CD4-positive, alpha-beta T cell (primary cell): ENCODE measurements at regions of chr5 and their contacts with region 1.

Region 1: GRCh38 chr5:160418561-160419457 is at the start of gene SLU7:
- DNase-seq: peak; percentile 86 to 96 (median 90)
- ATAC-seq: peak; percentile 79
- H3K4me3 ChIP-seq: peak within 1 kb of the TSS; percentile 94
- H3K4me3 Mint-ChIP-seq: peak within 1 kb of the TSS; percentile 98
- H3K27ac ChIP-seq: peak within 1 kb of the TSS; percentile 88 to 91
- H3K27ac Mint-ChIP-seq: peak within 1 kb of the TSS; percentile 92
- H3K4me1 ChIP-seq: peaks cover 33% of the 10 kb centered on the region
- H3K4me1 Mint-ChIP-seq: peaks cover 85% of the 10 kb centered on the region
- H3K27me3 ChIP-seq: no peaks in the 10 kb centered on the region
- H3K27me3 Mint-ChIP-seq: no peaks in the 10 kb centered on the region
- CTCF ChIP-seq: no peak
- total RNA-seq, gene SLU7: 99.9 to 106 TPM

Region 2: DNA sequence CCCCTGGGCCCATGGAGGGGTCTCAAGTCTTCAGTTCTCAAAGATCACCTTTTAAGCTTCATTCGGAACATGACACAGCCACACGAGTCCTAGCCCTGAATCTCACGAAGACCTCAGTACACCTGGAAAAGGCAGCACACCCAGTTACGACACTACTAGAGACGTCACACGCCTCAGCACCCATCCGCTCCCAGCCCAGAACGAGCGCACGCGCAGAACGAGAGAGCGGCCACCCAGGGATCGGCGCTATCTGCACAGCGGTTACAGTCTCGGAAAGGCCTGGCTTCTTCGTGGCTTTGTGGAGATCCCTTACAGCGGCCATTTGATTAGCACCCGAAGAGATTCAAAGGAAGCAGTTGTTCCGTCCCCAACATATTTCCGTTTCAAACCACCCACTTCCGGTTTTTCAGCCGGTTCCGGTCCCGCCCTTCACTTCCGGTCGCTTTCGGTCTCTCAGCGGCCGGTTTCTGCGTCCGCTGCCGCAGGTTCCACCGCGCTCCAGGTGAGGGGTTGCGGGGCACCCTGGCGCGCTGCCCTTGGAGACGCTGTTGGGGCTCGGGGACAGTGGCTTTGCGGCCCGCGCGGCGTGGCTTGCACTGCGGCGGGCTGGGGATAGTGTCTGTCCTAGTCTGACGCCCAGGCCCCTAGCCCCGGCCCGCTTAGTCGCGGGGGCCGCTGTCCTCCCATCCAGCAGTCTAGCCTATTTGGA is 1155.8 kb before region 1 on chr5 and contains the start of gene UBLCP1:
- CTCF ChIA-PET with region 1: no interaction called
- POLR2A ChIA-PET with region 1: no interaction called
- intact Hi-C with region 1: loop called in 1 of 2 experiments (anchors 10 kb)
- DNase-seq: peak; percentile 55 to 94 (median 70)
- ATAC-seq: peak; percentile 90
- H3K4me3 ChIP-seq: peak within 1 kb of the TSS; percentile 74
- H3K4me3 Mint-ChIP-seq: peak within 1 kb of the TSS; percentile 88
- H3K27ac ChIP-seq: peak within 1 kb of the TSS; percentile 90 to 94
- H3K27ac Mint-ChIP-seq: peak within 1 kb of the TSS; percentile 96
- H3K4me1 ChIP-seq: peaks cover 18% of the 10 kb centered on the region
- H3K4me1 Mint-ChIP-seq: peaks cover 53% of the 10 kb centered on the region
- H3K27me3 ChIP-seq: no peaks in the 10 kb centered on the region
- H3K27me3 Mint-ChIP-seq: no peaks in the 10 kb centered on the region
- CTCF ChIP-seq: no peak
- total RNA-seq, gene UBLCP1: 16.5 to 19.0 TPM

Region 3: GRCh38 chr5:160119142-160119904 is 299.5 kb before region 1 on chr5 and contains the start of gene PWWP2A:
- CTCF ChIA-PET with region 1: no interaction called
- POLR2A ChIA-PET with region 1: interaction called, 4 read pairs
- intact Hi-C with region 1: loop called (anchors 5 to 10 kb)
- DNase-seq: peak; percentile 94 to 100 (median 96)
- ATAC-seq: peak; percentile 92
- H3K4me3 ChIP-seq: peak within 1 kb of the TSS; percentile 70
- H3K4me3 Mint-ChIP-seq: peak within 1 kb of the TSS; percentile 96
- H3K27ac ChIP-seq: peak within 1 kb of the TSS; percentile 68 to 87
- H3K27ac Mint-ChIP-seq: peak within 1 kb of the TSS; percentile 82
- H3K4me1 ChIP-seq: peaks cover 20% of the 10 kb centered on the region
- H3K4me1 Mint-ChIP-seq: peaks cover 20% of the 10 kb centered on the region
- H3K27me3 ChIP-seq: no peaks in the 10 kb centered on the region
- H3K27me3 Mint-ChIP-seq: peaks cover 8% of the 10 kb centered on the region
- CTCF ChIP-seq: no peak
- total RNA-seq, gene PWWP2A: 18.2 to 23.2 TPM

Region 4: GRCh38 chr5:160439205-160439600 is 20.4 kb after region 1 on chr5:
- CTCF ChIA-PET with region 1: interaction called, 114 read pairs
- POLR2A ChIA-PET with region 1: interaction called, 32 read pairs
- intact Hi-C with region 1: no loop called
- DNase-seq: peak; percentile 75 to 94 (median 88)
- ATAC-seq: peak; percentile 84
- H3K4me3 ChIP-seq: peak overlapping the region; percentile 61
- H3K4me3 Mint-ChIP-seq: peak overlapping the region; percentile 85
- H3K27ac ChIP-seq: peak overlapping the region in 1 of 2 donors; percentile 37
- H3K27ac Mint-ChIP-seq: peak overlapping the region; percentile 58
- H3K4me1 ChIP-seq: peaks cover 18% of the 10 kb centered on the region
- H3K4me1 Mint-ChIP-seq: peaks cover 4% of the 10 kb centered on the region
- H3K27me3 ChIP-seq: no peaks in the 10 kb centered on the region
- H3K27me3 Mint-ChIP-seq: peaks cover 3% of the 10 kb centered on the region
- CTCF ChIP-seq: peak; percentile 81

Region 5: DNA sequence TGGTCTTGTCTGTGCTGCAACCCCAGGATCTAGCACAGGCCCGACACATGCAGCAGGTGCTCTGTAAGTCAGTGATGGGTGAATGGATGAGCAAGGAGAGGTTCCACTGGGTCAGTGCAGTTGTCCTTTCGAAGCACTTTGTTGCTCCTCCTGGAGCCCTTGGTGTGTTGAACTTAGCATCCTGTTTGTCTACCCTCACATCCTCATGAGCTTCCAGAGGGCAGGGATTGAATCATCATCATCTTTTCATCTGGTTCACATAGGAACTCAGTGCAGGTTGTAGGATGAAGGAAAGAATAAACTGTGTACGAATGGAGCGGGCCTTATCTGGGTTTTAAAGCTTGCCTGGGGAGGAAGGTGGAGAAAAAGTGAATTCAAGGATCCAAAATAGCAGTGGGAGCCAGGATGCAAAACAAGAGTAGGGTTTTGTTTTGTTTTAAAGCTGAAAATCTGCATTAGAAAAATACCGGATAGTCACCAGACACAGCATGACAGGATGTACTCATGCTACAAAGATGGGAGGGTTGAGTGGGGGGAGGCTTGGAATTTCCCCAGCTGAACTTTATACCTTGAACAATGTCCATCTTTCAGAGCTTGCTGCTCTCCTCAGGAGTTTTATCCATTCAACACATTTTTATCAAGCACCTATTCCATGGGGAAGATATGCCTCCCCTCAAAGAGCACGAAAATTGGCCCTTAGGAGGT is 58.6 kb after region 1 on chr5:
- CTCF ChIA-PET with region 1: no interaction called
- POLR2A ChIA-PET with region 1: no interaction called
- intact Hi-C with region 1: no loop called
- DNase-seq: peak in 4 of 14 experiments; percentile 27 to 74 (median 68)
- ATAC-seq: peak; percentile 82
- H3K4me3 ChIP-seq: peak overlapping the region; percentile 8
- H3K4me3 Mint-ChIP-seq: peak overlapping the region; percentile 80
- H3K27ac ChIP-seq: peak overlapping the region; percentile 57 to 61
- H3K27ac Mint-ChIP-seq: peak overlapping the region; percentile 88
- H3K4me1 ChIP-seq: peaks cover 64% of the 10 kb centered on the region
- H3K4me1 Mint-ChIP-seq: peaks cover 72% of the 10 kb centered on the region
- H3K27me3 ChIP-seq: no peaks in the 10 kb centered on the region
- H3K27me3 Mint-ChIP-seq: no peaks in the 10 kb centered on the region
- CTCF ChIP-seq: no peak

Region 6: GRCh38 chr5:160508780-160509361 is 90.1 kb after region 1 on chr5:
- CTCF ChIA-PET with region 1: interaction called, 5 read pairs
- POLR2A ChIA-PET with region 1: interaction called, 3 read pairs
- intact Hi-C with region 1: loop called in 1 of 2 experiments (anchors 5 kb)
- DNase-seq: peak; percentile 22 to 91 (median 48)
- ATAC-seq: peak; percentile 72
- H3K4me3 ChIP-seq: no peak overlapping the region
- H3K4me3 Mint-ChIP-seq: peak overlapping the region; percentile 22
- H3K27ac ChIP-seq: no peak overlapping the region
- H3K27ac Mint-ChIP-seq: peak overlapping the region; percentile 29
- H3K4me1 ChIP-seq: peaks cover 40% of the 10 kb centered on the region
- H3K4me1 Mint-ChIP-seq: peaks cover 28% of the 10 kb centered on the region
- H3K27me3 ChIP-seq: no peaks in the 10 kb centered on the region
- H3K27me3 Mint-ChIP-seq: no peaks in the 10 kb centered on the region
- CTCF ChIP-seq: peak; percentile 83